Posterior cingulate gyrus (tissue), 11 donors: ENCODE measurements at regions of chr10 and their contacts with region 1.

Region 1: GRCh38 chr10:23139677-23140076 is 44.3 kb downstream of the MSRB2 start:
- DNase-seq: no peak

Region 2: DNA sequence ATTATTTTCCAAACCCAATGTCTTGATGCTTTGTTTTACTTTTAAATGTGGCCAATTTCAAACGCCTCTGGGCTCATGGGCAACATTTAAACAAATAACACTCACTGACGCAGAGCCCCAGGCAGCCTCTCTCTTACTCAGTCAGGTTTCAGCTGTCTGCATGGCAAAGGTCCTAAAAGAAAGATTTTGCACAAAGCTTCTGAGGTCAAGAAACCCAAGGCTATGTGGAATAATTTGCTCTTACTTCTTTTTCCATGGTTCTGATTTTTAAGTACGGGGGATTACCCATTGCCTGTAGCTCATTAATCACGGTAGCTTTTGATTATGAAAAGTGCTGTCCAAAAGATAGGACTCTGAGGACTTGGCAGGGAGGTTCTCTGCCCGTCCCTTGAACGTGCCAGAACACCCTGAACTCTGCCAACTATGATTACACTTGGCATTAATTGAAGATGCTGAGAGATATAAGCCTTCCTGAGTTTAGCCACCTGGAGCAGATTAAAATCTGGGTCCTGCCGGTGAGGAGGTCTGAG is 58.4 kb before region 1 on chr10:
- intact Hi-C with region 1: no loop called
- DNase-seq: no peak

Region 3: DNA sequence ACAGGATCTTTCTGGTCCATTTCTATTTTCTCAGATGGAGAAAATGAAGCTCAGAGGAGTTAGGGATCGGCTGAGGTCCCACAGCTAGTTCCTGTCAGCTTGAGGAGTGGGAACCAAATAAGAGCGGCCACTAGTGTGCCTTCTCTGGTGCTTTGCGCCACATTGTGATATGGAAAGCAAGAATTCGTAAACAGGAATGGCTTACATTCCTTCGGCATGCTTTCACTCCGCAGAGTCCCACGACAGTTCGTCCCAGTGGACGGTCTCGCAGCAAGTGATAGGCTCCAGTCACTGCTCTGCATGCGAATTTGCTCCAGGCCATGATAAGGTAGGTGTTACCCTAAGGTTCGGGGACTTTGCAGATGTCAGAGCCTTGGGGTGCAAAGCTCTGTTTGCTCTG is 10.9 kb after region 1 on chr10:
- intact Hi-C with region 1: loop called (anchors 1 kb)
- DNase-seq: no peak

Region 4: DNA sequence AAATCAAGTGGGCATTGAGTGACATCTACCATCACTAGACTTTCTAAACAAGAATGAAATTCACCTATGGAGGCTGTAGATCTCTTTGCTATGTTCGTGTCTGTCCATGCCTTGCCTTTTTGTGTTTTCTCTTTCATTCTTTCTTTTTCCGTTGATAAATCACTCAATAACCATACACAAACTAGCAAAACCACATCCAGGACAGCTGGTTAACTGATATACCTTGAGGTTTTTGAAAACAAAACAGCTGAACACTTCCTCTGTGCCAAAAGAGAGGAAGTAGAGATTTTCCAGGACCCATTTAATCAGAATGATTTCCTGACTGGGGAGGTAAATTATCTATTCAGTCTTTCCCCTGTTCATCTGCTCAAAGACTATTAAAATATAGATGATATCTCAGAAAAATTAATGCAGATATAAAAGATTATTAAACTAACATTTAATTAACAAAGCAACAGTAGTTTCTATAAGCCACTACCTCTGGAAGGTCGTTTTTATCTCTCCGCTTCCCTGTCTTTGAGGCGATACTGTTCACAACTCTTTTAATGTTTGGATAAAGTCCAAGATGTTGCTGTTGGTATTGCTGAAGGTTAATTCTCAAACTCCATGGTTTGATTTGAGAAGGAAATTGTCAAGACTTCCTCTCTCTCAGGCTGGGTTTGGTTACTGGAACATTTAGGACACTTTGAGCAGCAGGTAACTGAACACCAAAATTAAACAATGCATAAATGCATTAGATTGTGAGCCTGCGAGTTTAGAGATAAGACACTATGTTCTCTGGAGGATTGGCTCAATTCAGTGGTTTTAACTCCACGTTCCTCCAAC is 229.4 kb after region 1 on chr10:
- intact Hi-C with region 1: no loop called
- DNase-seq: no peak